IMR-90 (cell line): ENCODE measurements at regions of chr7 and their contacts with region 1.

Region 1: DNA sequence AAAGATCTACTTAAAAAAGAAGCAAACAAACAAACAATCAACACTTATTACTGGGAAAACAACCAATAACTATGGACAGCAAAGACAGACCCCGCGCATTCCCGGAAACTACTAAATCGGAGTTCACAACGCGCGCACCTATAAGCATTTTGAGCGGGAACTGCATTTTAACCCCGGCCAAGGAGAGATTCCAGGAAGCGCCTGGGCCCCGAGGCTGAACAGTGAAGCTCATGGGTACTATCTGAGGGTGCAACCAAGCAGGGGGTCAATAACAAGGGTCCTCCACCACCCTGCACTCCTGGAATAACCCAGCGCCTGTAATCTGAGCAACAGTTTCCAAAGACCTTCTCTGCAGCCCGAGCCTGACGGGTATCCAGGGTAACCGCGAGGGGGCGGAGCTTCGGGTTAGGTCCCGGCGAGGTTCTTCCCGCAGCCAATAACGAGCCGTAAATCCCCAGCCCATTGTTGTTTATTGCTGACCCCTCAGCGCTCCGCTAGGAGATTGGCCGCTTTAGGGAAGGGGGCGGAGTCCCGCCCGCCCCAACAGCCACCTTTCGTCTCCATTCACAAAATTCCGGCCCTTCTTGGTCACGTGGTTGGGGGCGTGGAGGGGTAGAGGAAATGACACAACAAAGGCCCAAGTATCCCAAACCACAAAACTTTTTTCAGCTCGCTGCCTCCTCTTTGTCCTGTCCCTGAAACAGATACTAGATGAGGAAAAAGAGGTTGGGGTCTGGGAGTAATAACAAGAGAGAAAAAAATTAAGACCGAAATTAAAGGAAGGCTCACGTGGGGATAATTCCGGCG is 1.7 kb upstream of the ETV1 start:
- DNase-seq: peak; percentile 98
- ATAC-seq: peak; percentile 93
- H3K4me3 ChIP-seq: peak overlapping the region; percentile 91
- H3K27ac ChIP-seq: peak overlapping the region; percentile 70
- H3K4me1 ChIP-seq: no peaks in the 10 kb centered on the region
- H3K27me3 ChIP-seq: no peaks in the 10 kb centered on the region
- CTCF ChIP-seq: no peak
- POLR2A ChIP-seq: peak; percentile 71; the same call in 1 of the 2 replicates
- RAD21 ChIP-seq: no peak; the same call in 1 of the 2 replicates

Region 2: DNA sequence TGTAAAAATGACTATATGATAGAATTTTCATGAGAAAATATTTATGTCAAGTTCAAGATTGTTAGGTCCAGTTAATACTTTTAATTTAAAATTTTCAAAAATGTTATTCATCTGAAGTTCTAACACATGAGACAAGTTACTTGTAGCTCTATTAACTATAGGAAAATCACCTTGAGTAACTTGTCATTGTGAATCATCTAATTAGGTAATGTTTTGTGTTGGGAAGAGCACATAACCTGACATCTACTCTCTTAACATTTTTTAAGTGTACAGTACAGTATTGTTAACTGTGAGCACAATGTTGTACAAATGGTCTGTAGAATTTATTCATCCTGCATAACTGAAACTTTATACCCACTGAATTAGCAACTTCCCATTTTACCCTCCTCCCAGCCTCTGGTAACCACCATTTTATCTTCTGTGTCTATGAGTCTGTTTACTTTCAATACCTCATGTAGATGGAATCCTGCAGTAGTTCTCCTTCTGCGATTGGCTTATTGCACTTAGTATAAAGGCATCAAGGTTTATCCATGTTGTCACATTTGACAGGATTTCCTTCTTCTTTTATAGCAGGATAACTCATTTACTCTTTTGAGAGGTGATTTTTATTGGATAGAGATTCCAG is 1249.1 kb before region 1 on chr7:
- CTCF ChIA-PET with region 1: no interaction called
- POLR2A ChIA-PET with region 1: no interaction called
- dilution Hi-C with region 1: no loop called
- in situ Hi-C with region 1: no loop called
- intact Hi-C with region 1: no loop called
- DNase-seq: peak; percentile 74
- ATAC-seq: peak; percentile 89
- H3K4me3 ChIP-seq: no peak overlapping the region
- H3K27ac ChIP-seq: no peak overlapping the region
- H3K4me1 ChIP-seq: no peaks in the 10 kb centered on the region
- H3K27me3 ChIP-seq: no peaks in the 10 kb centered on the region
- CTCF ChIP-seq: no peak
- POLR2A ChIP-seq: no peak
- RAD21 ChIP-seq: no peak

Region 3: GRCh38 chr7:13279854-13280435 is 711.2 kb before region 1 on chr7:
- CTCF ChIA-PET with region 1: no interaction called
- POLR2A ChIA-PET with region 1: no interaction called
- dilution Hi-C with region 1: no loop called
- in situ Hi-C with region 1: no loop called
- intact Hi-C with region 1: loop called (anchors 2 kb)
- DNase-seq: peak; percentile 10
- ATAC-seq: no peak
- H3K4me3 ChIP-seq: no peak overlapping the region
- H3K27ac ChIP-seq: no peak overlapping the region
- H3K4me1 ChIP-seq: no peaks in the 10 kb centered on the region
- H3K27me3 ChIP-seq: no peaks in the 10 kb centered on the region
- CTCF ChIP-seq: peak; percentile 39
- POLR2A ChIP-seq: no peak
- RAD21 ChIP-seq: peak; percentile 30

Region 4: GRCh38 chr7:13540429-13540828 is 450.8 kb before region 1 on chr7:
- CTCF ChIA-PET with region 1: interaction called, 3 read pairs
- POLR2A ChIA-PET with region 1: no interaction called
- dilution Hi-C with region 1: no loop called
- in situ Hi-C with region 1: no loop called
- intact Hi-C with region 1: loop called (anchors 5 kb)
- DNase-seq: peak; percentile 81
- ATAC-seq: peak; percentile 72
- H3K4me3 ChIP-seq: no peak overlapping the region
- H3K27ac ChIP-seq: no peak overlapping the region
- H3K4me1 ChIP-seq: no peaks in the 10 kb centered on the region
- H3K27me3 ChIP-seq: no peaks in the 10 kb centered on the region
- CTCF ChIP-seq: no peak
- POLR2A ChIP-seq: no peak
- RAD21 ChIP-seq: no peak

Region 5: DNA sequence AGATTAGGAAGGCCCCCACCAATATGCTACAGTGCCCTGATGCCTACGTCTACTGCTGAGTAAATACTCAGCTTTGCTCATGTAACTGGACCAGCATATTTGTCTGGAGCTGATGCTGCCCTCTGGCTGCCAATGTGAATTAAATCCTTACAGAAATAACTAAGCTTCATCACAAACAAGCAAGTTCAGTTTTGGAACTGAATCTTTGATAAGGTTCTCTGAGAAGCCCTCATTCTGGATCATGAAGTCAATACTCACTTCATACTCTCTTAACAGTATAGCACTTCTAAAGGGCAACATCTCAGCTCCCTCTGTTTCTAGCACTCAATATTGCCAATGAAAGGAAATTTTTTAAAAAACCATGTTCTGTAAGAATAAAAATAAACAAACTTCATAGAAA is 248.4 kb before region 1 on chr7:
- CTCF ChIA-PET with region 1: interaction called, 6 read pairs
- POLR2A ChIA-PET with region 1: no interaction called
- dilution Hi-C with region 1: no loop called
- in situ Hi-C with region 1: no loop called
- intact Hi-C with region 1: loop called (anchors 2 kb)
- DNase-seq: peak; percentile 56
- ATAC-seq: peak; percentile 90
- H3K4me3 ChIP-seq: no peak overlapping the region
- H3K27ac ChIP-seq: no peak overlapping the region
- H3K4me1 ChIP-seq: peaks cover 2% of the 10 kb centered on the region
- H3K27me3 ChIP-seq: no peaks in the 10 kb centered on the region
- CTCF ChIP-seq: peak; percentile 50
- POLR2A ChIP-seq: no peak
- RAD21 ChIP-seq: peak; percentile 44

Region 6: GRCh38 chr7:13920053-13920697 is 71.0 kb before region 1 on chr7:
- CTCF ChIA-PET with region 1: interaction called, 3 read pairs
- POLR2A ChIA-PET with region 1: no interaction called
- dilution Hi-C with region 1: no loop called
- in situ Hi-C with region 1: no loop called
- intact Hi-C with region 1: loop called (anchors 1 kb)
- DNase-seq: peak; percentile 100
- ATAC-seq: peak; percentile 94
- H3K4me3 ChIP-seq: no peak overlapping the region
- H3K27ac ChIP-seq: peak overlapping the region; percentile 76
- H3K4me1 ChIP-seq: peaks cover 1% of the 10 kb centered on the region; the same call in 1 of the 2 replicates
- H3K27me3 ChIP-seq: no peaks in the 10 kb centered on the region
- CTCF ChIP-seq: no peak
- POLR2A ChIP-seq: no peak
- RAD21 ChIP-seq: peak; percentile 18; the same call in 1 of the 2 replicates

Region 7: DNA sequence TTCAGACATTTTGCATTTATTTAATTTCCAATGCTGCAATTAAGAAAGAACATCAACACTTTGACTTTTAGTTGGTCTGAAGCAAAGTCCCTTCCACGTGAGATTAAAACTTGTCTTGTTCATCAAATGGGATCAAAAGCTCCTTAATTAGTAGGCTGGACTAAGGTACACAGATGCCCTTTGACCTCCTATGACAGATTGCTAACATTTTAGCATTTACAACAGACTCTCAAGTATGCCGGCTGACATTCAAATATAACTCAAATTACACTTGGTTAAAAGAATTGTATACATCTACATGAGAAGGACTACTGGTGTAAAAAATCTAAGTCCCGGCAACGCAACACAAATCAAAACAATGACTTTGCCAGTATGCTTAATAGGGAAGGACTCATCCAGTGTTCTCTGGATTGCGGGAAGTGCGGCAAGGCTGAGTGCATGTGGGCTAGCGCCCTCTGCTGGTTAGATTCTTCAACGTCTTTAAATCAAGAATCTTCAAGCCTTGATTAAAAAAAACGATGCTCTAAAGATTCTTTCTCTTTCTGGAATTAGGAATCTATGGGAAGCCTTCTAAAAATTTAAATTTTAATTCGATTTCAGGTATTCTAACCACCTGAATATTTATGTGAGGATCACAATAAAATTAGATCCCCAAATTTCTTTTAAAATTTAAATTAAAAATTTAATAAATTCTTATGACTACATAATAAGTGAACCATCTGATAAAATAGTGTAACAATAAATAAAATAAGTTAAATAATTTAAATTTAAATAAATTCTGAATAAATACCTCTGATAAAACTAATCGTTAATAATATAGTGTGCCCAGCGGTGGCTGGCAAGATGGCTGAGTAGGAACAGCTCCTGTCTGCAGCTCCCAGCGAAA is 466.6 kb after region 1 on chr7:
- CTCF ChIA-PET with region 1: interaction called, 6 read pairs
- POLR2A ChIA-PET with region 1: no interaction called
- dilution Hi-C with region 1: no loop called
- in situ Hi-C with region 1: no loop called
- intact Hi-C with region 1: loop called (anchors 1 kb)
- DNase-seq: peak; percentile 82
- ATAC-seq: peak; percentile 91
- H3K4me3 ChIP-seq: no peak overlapping the region
- H3K27ac ChIP-seq: no peak overlapping the region
- H3K4me1 ChIP-seq: no peaks in the 10 kb centered on the region
- H3K27me3 ChIP-seq: no peaks in the 10 kb centered on the region
- CTCF ChIP-seq: peak; percentile 84
- POLR2A ChIP-seq: no peak
- RAD21 ChIP-seq: peak; percentile 91